CD8-positive, alpha-beta T cell (primary cell): ENCODE measurements at regions of chr18 and their contacts with region 1.

Region 1: DNA sequence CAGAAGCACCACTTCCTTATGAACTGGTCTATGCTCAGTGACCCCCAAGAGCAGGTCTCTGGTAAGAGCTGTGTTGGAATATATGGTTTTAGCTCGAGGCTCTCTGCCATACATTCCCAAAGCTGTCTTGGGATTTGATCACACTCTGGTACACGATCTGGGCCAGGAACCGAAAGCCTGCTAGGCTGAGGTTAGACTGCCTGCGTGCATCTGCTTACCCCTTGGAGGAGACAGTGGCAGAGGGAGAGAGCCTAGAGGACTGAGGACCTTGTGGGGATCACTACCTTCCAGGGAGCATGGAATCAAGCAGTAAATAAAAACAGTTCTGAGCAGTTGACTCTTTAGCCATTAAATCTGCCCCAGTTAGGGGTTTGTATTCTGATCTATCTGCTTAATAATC is 63.7 kb downstream of the ZNF532 start:
- DNase-seq: no peak
- ATAC-seq: no peak
- H3K4me3 ChIP-seq: no peak overlapping the region
- H3K4me3 Mint-ChIP-seq: no peak overlapping the region
- H3K27ac ChIP-seq: no peak overlapping the region
- H3K27ac Mint-ChIP-seq: no peak overlapping the region
- H3K4me1 ChIP-seq: no peaks in the 10 kb centered on the region
- H3K4me1 Mint-ChIP-seq: no peaks in the 10 kb centered on the region
- H3K27me3 ChIP-seq: no peaks in the 10 kb centered on the region
- H3K27me3 Mint-ChIP-seq: peaks cover 32% of the 10 kb centered on the region
- CTCF ChIP-seq: no peak

Region 2: DNA sequence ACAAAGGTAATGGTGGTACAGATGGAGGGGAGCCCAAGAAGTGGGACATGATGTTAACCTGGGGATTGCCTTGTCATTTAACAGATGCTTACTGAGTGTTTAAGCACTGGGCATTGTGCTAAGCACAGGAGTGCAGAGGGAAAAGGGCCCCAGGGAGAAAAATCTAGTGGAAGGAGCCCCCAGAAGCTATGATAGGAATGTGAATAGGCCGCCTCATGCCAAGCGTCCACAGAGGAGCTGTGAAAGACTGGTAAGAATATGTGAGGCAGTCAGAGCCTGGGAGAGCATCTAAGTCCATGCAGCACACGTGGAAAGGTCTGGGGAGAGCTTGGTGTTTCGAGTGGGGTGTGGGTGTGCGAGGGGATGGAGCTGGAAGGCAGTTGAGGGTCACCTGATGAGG is 58.3 kb before region 1 on chr18:
- CTCF ChIA-PET with region 1: no interaction called
- POLR2A ChIA-PET with region 1: no interaction called
- intact Hi-C with region 1: no loop called
- DNase-seq: no peak
- ATAC-seq: no peak
- H3K4me3 ChIP-seq: no peak overlapping the region
- H3K4me3 Mint-ChIP-seq: no peak overlapping the region
- H3K27ac ChIP-seq: no peak overlapping the region
- H3K27ac Mint-ChIP-seq: no peak overlapping the region
- H3K4me1 ChIP-seq: no peaks in the 10 kb centered on the region
- H3K4me1 Mint-ChIP-seq: peaks cover under 1% of the 10 kb centered on the region
- H3K27me3 ChIP-seq: no peaks in the 10 kb centered on the region
- H3K27me3 Mint-ChIP-seq: peaks cover 54% of the 10 kb centered on the region
- CTCF ChIP-seq: no peak

Region 3: GRCh38 chr18:58980991-58981390 is 52.6 kb after region 1 on chr18:
- CTCF ChIA-PET with region 1: no interaction called
- POLR2A ChIA-PET with region 1: no interaction called
- intact Hi-C with region 1: loop called in 1 of 2 experiments (anchors 10 kb)
- DNase-seq: no peak
- ATAC-seq: no peak
- H3K4me3 ChIP-seq: no peak overlapping the region
- H3K4me3 Mint-ChIP-seq: no peak overlapping the region
- H3K27ac ChIP-seq: no peak overlapping the region
- H3K27ac Mint-ChIP-seq: no peak overlapping the region
- H3K4me1 ChIP-seq: no peaks in the 10 kb centered on the region
- H3K4me1 Mint-ChIP-seq: no peaks in the 10 kb centered on the region
- H3K27me3 ChIP-seq: no peaks in the 10 kb centered on the region
- H3K27me3 Mint-ChIP-seq: peaks cover 12% of the 10 kb centered on the region
- CTCF ChIP-seq: no peak